ENCODE measurements at regions of chr12 and their contacts with region 1.

Region 1: GRCh38 chr12:48157018-48157888 is at the start of gene ASB8:
- DNase-seq: peak; percentile 98
- ATAC-seq: peak; percentile 95
- H3K4me3 ChIP-seq: peak within 1 kb of the TSS; percentile 86
- H3K27ac ChIP-seq: peak within 1 kb of the TSS; percentile 89
- H3K4me1 ChIP-seq: peaks cover 23% of the 10 kb centered on the region
- H3K27me3 ChIP-seq: no peaks in the 10 kb centered on the region
- CTCF ChIP-seq: peak; percentile 31 to 58 (median 58); a peak in 5 of 6 replicates
- EP300 ChIP-seq: no peak
- POLR2A ChIP-seq: peak; percentile 82
- RAD21 ChIP-seq: no peak
- polyA plus RNA-seq, gene ASB8: 28.3 to 30.3 TPM

Region 2: DNA sequence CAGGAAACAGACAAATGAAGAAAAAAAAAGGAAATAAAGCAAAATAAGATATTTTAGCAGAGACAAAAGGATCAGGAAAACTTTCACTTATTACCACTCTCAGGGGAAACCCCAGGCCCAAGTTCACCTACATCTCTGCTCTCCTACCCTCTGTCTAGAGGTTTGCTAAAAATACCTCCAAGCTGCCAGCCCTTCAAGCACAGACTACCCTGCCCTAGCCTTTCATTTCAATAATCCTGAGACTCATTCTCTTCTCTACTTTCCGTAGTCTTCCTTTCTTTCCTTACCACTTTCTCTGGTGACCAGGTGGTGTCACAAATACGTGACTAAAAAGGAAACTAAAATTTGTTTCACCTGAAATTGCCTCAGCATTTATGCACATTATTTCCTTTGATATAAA is 485.2 kb before region 1 on chr12:
- CTCF ChIA-PET with region 1: no interaction called
- POLR2A ChIA-PET with region 1: no interaction called
- RAD21 ChIA-PET with region 1: no interaction called
- SMC1A ChIA-PET with region 1: no interaction called
- in situ Hi-C with region 1: no loop called
- intact Hi-C with region 1: no loop called
- DNase-seq: no peak
- ATAC-seq: no peak
- H3K4me3 ChIP-seq: no peak overlapping the region
- H3K27ac ChIP-seq: no peak overlapping the region
- H3K4me1 ChIP-seq: no peaks in the 10 kb centered on the region
- H3K27me3 ChIP-seq: no peaks in the 10 kb centered on the region
- CTCF ChIP-seq: no peak
- EP300 ChIP-seq: no peak
- POLR2A ChIP-seq: no peak
- RAD21 ChIP-seq: no peak

Region 3: GRCh38 chr12:48023399-48023785 is 133.9 kb before region 1 on chr12:
- CTCF ChIA-PET with region 1: no interaction called
- POLR2A ChIA-PET with region 1: no interaction called
- RAD21 ChIA-PET with region 1: no interaction called
- SMC1A ChIA-PET with region 1: no interaction called
- in situ Hi-C with region 1: no loop called
- intact Hi-C with region 1: no loop called
- DNase-seq: no peak
- ATAC-seq: no peak
- H3K4me3 ChIP-seq: no peak overlapping the region
- H3K27ac ChIP-seq: no peak overlapping the region
- H3K4me1 ChIP-seq: no peaks in the 10 kb centered on the region
- H3K27me3 ChIP-seq: peaks cover 3 to 5% of the 10 kb centered on the region in 2 experiments; a peak in 3 of 4 replicates
- CTCF ChIP-seq: no peak
- EP300 ChIP-seq: no peak
- POLR2A ChIP-seq: no peak
- RAD21 ChIP-seq: no peak

Region 4: GRCh38 chr12:48084066-48084465 is 73.2 kb before region 1 on chr12:
- CTCF ChIA-PET with region 1: interaction called, 38 read pairs
- POLR2A ChIA-PET with region 1: no interaction called
- RAD21 ChIA-PET with region 1: no interaction called
- SMC1A ChIA-PET with region 1: interaction called, 4 read pairs
- in situ Hi-C with region 1: no loop called
- intact Hi-C with region 1: no loop called
- DNase-seq: no peak
- ATAC-seq: no peak
- H3K4me3 ChIP-seq: no peak overlapping the region
- H3K27ac ChIP-seq: no peak overlapping the region
- H3K4me1 ChIP-seq: no peaks in the 10 kb centered on the region; the same call in 1 of the 2 replicates
- H3K27me3 ChIP-seq: no peaks in the 10 kb centered on the region; a peak in 1 of 4 replicates
- CTCF ChIP-seq: no peak; a peak in 1 of 6 replicates
- EP300 ChIP-seq: no peak
- POLR2A ChIP-seq: no peak
- RAD21 ChIP-seq: peak; percentile 28

Region 5: GRCh38 chr12:48105862-48106680 is 51.2 kb before region 1 on chr12 and contains the start of gene SENP1:
- CTCF ChIA-PET with region 1: interaction called, 11 read pairs
- POLR2A ChIA-PET with region 1: interaction called, 10 read pairs
- RAD21 ChIA-PET with region 1: interaction called, 13 read pairs
- SMC1A ChIA-PET with region 1: interaction called, 12 read pairs
- in situ Hi-C with region 1: no loop called
- intact Hi-C with region 1: loop called (anchors 1 kb)
- DNase-seq: peak; percentile 75
- ATAC-seq: peak; percentile 82
- H3K4me3 ChIP-seq: peak within 1 kb of the TSS; percentile 97
- H3K27ac ChIP-seq: peak within 1 kb of the TSS; percentile 99
- H3K4me1 ChIP-seq: peaks cover 23% of the 10 kb centered on the region
- H3K27me3 ChIP-seq: no peaks in the 10 kb centered on the region
- CTCF ChIP-seq: peak in 1 of 3 experiments; percentile 12; a peak in 1 of 6 replicates
- EP300 ChIP-seq: peak in 1 of 2 experiments; percentile 65; a peak in 2 of 4 replicates
- POLR2A ChIP-seq: peak; percentile 71
- RAD21 ChIP-seq: no peak
- polyA plus RNA-seq, gene SENP1: 8.1 to 12.5 TPM

Region 6: DNA sequence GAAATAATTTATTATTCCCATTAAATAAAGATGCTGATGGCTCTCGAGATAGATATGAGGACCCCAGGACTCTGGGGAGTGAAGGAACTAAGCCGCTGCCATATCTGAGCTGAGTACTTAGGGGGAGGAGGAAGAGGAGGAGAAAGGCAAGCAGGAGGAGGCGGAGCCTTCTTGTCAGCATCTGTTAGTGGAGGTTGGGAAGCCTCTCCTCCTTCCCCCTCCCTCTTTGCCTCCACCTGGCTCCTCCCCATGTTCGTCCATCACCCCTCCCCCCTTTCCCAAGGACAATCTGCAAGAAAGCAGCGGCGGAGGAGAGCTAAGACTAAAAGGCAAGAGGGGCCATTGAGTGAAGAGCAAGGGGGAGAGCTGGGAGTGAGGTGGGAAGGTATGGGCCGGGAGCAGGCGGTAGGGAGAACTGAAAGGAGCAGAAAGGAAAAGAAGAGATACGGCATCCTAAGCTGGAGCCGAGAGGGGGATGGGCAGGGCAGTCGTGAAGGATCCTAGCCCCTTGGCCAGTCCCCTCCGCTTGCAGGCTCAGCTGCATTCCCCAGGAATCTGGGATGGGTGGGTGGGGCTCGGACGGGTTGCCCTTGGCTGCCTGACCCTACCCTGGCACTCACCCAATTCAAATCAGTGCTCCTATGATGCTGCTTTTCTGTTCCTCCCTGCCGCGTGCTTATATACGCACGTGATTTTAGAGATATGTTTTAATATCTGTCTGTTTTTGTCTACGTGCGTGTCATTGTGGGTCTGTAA is 38.0 kb before region 1 on chr12 and contains the start of gene PFKM:
- CTCF ChIA-PET with region 1: interaction called, 4 read pairs
- POLR2A ChIA-PET with region 1: interaction called, 6 read pairs
- RAD21 ChIA-PET with region 1: interaction called, 4 read pairs
- SMC1A ChIA-PET with region 1: interaction called, 11 read pairs
- in situ Hi-C with region 1: no loop called
- intact Hi-C with region 1: no loop called
- DNase-seq: peak; percentile 76
- ATAC-seq: peak; percentile 100
- H3K4me3 ChIP-seq: peak within 1 kb of the TSS; percentile 88
- H3K27ac ChIP-seq: peak within 1 kb of the TSS; percentile 91
- H3K4me1 ChIP-seq: peaks cover 6% of the 10 kb centered on the region
- H3K27me3 ChIP-seq: no peaks in the 10 kb centered on the region
- CTCF ChIP-seq: no peak
- EP300 ChIP-seq: no peak
- POLR2A ChIP-seq: peak; percentile 40; the same call in 1 of the 2 replicates
- RAD21 ChIP-seq: no peak
- polyA plus RNA-seq, gene PFKM: 27.6 to 39.0 TPM

Region 7: GRCh38 chr12:48189331-48190125 is 32.3 kb after region 1 on chr12:
- CTCF ChIA-PET with region 1: interaction called, 14 read pairs
- POLR2A ChIA-PET with region 1: no interaction called
- RAD21 ChIA-PET with region 1: no interaction called
- SMC1A ChIA-PET with region 1: interaction called, 5 read pairs
- in situ Hi-C with region 1: no loop called
- intact Hi-C with region 1: no loop called
- DNase-seq: peak; percentile 34
- ATAC-seq: peak; percentile 82
- H3K4me3 ChIP-seq: no peak overlapping the region
- H3K27ac ChIP-seq: no peak overlapping the region
- H3K4me1 ChIP-seq: no peaks in the 10 kb centered on the region; the same call in 1 of the 2 replicates
- H3K27me3 ChIP-seq: peaks cover 4 to 6% of the 10 kb centered on the region in 2 experiments
- CTCF ChIP-seq: peak; percentile 77 to 92 (median 83)
- EP300 ChIP-seq: no peak
- POLR2A ChIP-seq: no peak
- RAD21 ChIP-seq: peak; percentile 84

Measured in GM12878 (cell line).